CD4-positive, alpha-beta T cell (primary cell): ENCODE measurements at regions of chr10 and their contacts with region 1.

Region 1: GRCh38 chr10:92848441-92849233 is at the start of gene EXOC6:
- DNase-seq: peak; percentile 75 to 95 (median 85)
- ATAC-seq: peak; percentile 87
- H3K4me3 ChIP-seq: peak within 1 kb of the TSS; percentile 69
- H3K4me3 Mint-ChIP-seq: peak within 1 kb of the TSS; percentile 94
- H3K27ac ChIP-seq: peak within 1 kb of the TSS; percentile 72
- H3K27ac Mint-ChIP-seq: peak within 1 kb of the TSS; percentile 85
- H3K4me1 ChIP-seq: peaks cover 12% of the 10 kb centered on the region
- H3K4me1 Mint-ChIP-seq: peaks cover 36% of the 10 kb centered on the region
- H3K27me3 ChIP-seq: no peaks in the 10 kb centered on the region
- H3K27me3 Mint-ChIP-seq: no peaks in the 10 kb centered on the region
- CTCF ChIP-seq: no peak
- total RNA-seq, gene EXOC6: 6.6 to 7.4 TPM

Region 2: DNA sequence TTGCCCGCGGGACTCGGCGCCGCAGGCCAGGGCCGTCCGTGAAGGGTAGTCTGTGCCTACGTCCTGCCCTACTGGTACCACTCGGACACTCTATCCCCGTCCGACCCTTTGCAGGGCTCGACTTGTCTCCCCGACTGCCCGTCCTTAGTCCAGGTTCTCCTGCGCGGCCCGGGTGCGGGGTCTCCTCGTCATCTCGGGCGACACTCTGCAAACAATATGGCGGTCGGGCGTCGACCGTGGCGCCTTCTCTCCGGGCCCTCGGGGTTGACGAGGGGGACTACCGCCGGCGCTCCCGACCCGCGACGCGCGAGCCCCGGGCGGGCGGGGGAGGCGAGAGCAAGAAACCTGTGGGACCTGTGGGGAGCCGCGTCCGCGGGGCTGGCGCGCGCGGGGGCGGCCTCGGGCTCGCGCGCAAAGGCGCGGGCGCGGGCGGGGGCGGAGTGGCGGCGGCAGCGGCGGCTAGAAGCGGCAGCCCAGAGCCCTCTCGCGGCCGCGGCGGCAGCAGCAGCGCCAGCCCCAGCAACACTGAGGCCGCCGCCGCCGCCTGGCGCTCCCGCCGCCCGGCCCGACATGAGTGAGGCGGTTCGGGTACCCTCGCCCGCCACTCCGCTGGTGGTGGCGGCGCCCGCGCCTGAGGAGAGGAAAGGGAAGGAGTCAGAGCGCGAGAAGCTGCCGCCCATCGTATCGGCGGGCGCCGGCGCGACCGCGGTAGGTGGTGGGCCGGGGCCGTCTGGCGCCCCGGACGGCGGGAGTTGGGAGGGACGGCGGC is 1438.6 kb before region 1 on chr10 and contains the start of gene HECTD2:
- CTCF ChIA-PET with region 1: no interaction called
- POLR2A ChIA-PET with region 1: no interaction called
- intact Hi-C with region 1: loop called in 1 of 2 experiments (anchors 5 kb)
- DNase-seq: peak; percentile 61 to 94 (median 82)
- ATAC-seq: peak; percentile 85
- H3K4me3 ChIP-seq: peak within 1 kb of the TSS; percentile 92
- H3K4me3 Mint-ChIP-seq: peak within 1 kb of the TSS; percentile 92
- H3K27ac ChIP-seq: peak within 1 kb of the TSS; percentile 82 to 86
- H3K27ac Mint-ChIP-seq: peak within 1 kb of the TSS; percentile 86
- H3K4me1 ChIP-seq: peaks cover 14% of the 10 kb centered on the region
- H3K4me1 Mint-ChIP-seq: peaks cover 11% of the 10 kb centered on the region
- H3K27me3 ChIP-seq: peaks cover 3 to 8% of the 10 kb centered on the region in 2 experiments
- H3K27me3 Mint-ChIP-seq: no peaks in the 10 kb centered on the region
- CTCF ChIP-seq: peak; percentile 19
- total RNA-seq, gene HECTD2: 0.92 to 1.0 TPM

Region 3: GRCh38 chr10:92592761-92593618 is 255.6 kb before region 1 on chr10 and contains the start of gene KIF11:
- CTCF ChIA-PET with region 1: no interaction called
- POLR2A ChIA-PET with region 1: interaction called, 33 read pairs
- intact Hi-C with region 1: loop called in 1 of 2 experiments (anchors 5 kb)
- DNase-seq: peak; percentile 91 to 98 (median 96)
- ATAC-seq: peak; percentile 81
- H3K4me3 ChIP-seq: peak within 1 kb of the TSS; percentile 75
- H3K4me3 Mint-ChIP-seq: peak within 1 kb of the TSS; percentile 99
- H3K27ac ChIP-seq: peak within 1 kb of the TSS; percentile 84 to 89
- H3K27ac Mint-ChIP-seq: peak within 1 kb of the TSS; percentile 99
- H3K4me1 ChIP-seq: peaks cover 38% of the 10 kb centered on the region
- H3K4me1 Mint-ChIP-seq: peaks cover 29% of the 10 kb centered on the region
- H3K27me3 ChIP-seq: no peaks in the 10 kb centered on the region
- H3K27me3 Mint-ChIP-seq: no peaks in the 10 kb centered on the region
- CTCF ChIP-seq: no peak
- total RNA-seq, gene KIF11: 0.38 to 0.47 TPM

Region 4: GRCh38 chr10:92742331-92743228 is 106.1 kb before region 1 on chr10:
- CTCF ChIA-PET with region 1: no interaction called
- POLR2A ChIA-PET with region 1: no interaction called
- intact Hi-C with region 1: no loop called
- DNase-seq: peak in 3 of 14 experiments; percentile 16 to 28 (median 26)
- ATAC-seq: no peak
- H3K4me3 ChIP-seq: no peak overlapping the region
- H3K4me3 Mint-ChIP-seq: no peak overlapping the region
- H3K27ac ChIP-seq: no peak overlapping the region
- H3K27ac Mint-ChIP-seq: no peak overlapping the region
- H3K4me1 ChIP-seq: peaks cover 3% of the 10 kb centered on the region
- H3K4me1 Mint-ChIP-seq: no peaks in the 10 kb centered on the region
- H3K27me3 ChIP-seq: peaks cover 0 to 3% of the 10 kb centered on the region in 2 experiments
- H3K27me3 Mint-ChIP-seq: peaks cover 3% of the 10 kb centered on the region
- CTCF ChIP-seq: no peak

Region 5: DNA sequence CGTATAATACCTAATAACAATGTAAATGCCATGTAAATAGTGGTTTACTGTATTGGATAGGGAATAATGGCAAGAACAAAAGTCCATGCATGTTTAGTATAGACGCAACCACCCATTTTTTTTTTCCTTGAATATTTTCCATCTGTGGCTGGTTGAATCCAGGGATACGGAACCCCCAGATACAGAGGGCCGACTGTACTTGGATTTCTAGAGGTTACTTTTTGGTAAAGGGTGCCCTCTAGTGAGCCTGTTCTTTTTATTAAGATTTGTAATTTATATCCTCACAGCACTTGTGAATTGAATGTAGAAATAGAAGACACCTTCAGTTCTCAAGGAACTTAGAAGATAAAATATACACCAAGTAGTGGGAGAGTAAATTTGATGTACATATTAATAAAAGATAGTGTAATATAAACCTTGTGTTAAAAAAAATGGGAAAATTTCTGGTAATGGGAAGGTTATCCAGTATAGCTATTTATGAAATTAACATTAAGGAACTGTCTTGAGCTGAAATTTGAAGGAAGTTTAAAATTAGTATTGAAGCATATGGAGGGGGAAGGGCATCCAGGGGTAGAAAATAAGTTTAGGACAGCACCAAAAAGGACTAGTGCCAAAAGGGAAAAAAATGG is 31.7 kb after region 1 on chr10:
- CTCF ChIA-PET with region 1: interaction called, 10 read pairs
- POLR2A ChIA-PET with region 1: interaction called, 15 read pairs
- intact Hi-C with region 1: loop called (anchors 1 kb)
- DNase-seq: peak in 4 of 14 experiments; percentile 13 to 56 (median 56)
- ATAC-seq: peak; percentile 39
- H3K4me3 ChIP-seq: no peak overlapping the region
- H3K4me3 Mint-ChIP-seq: no peak overlapping the region
- H3K27ac ChIP-seq: no peak overlapping the region
- H3K27ac Mint-ChIP-seq: no peak overlapping the region
- H3K4me1 ChIP-seq: peaks cover 5% of the 10 kb centered on the region
- H3K4me1 Mint-ChIP-seq: peaks cover 29% of the 10 kb centered on the region
- H3K27me3 ChIP-seq: no peaks in the 10 kb centered on the region
- H3K27me3 Mint-ChIP-seq: no peaks in the 10 kb centered on the region
- CTCF ChIP-seq: peak; percentile 75

Region 6: GRCh38 chr10:93352638-93353383 is 504.2 kb after region 1 on chr10:
- CTCF ChIA-PET with region 1: no interaction called
- POLR2A ChIA-PET with region 1: no interaction called
- intact Hi-C with region 1: loop called (anchors 2 kb)
- DNase-seq: peak in 3 of 14 experiments; percentile 47 to 58 (median 50)
- ATAC-seq: no peak
- H3K4me3 ChIP-seq: no peak overlapping the region
- H3K4me3 Mint-ChIP-seq: no peak overlapping the region
- H3K27ac ChIP-seq: no peak overlapping the region
- H3K27ac Mint-ChIP-seq: no peak overlapping the region
- H3K4me1 ChIP-seq: no peaks in the 10 kb centered on the region
- H3K4me1 Mint-ChIP-seq: no peaks in the 10 kb centered on the region
- H3K27me3 ChIP-seq: peaks cover 0 to 5% of the 10 kb centered on the region in 2 experiments
- H3K27me3 Mint-ChIP-seq: peaks cover 30% of the 10 kb centered on the region
- CTCF ChIP-seq: peak; percentile 85

Region 7: GRCh38 chr10:93702211-93703001 is 853.8 kb after region 1 on chr10 and contains the start of gene FRA10AC1:
- CTCF ChIA-PET with region 1: interaction called, 3 read pairs
- POLR2A ChIA-PET with region 1: interaction called, 5 read pairs
- intact Hi-C with region 1: loop called in 1 of 2 experiments (anchors 10 kb)
- DNase-seq: peak; percentile 80 to 93 (median 86)
- ATAC-seq: peak; percentile 81
- H3K4me3 ChIP-seq: peak within 1 kb of the TSS; percentile 87
- H3K4me3 Mint-ChIP-seq: no peak within 1 kb of the TSS
- H3K27ac ChIP-seq: peak within 1 kb of the TSS; percentile 71 to 77
- H3K27ac Mint-ChIP-seq: no peak within 1 kb of the TSS
- H3K4me1 ChIP-seq: peaks cover 5% of the 10 kb centered on the region
- H3K4me1 Mint-ChIP-seq: peaks cover 19% of the 10 kb centered on the region
- H3K27me3 ChIP-seq: no peaks in the 10 kb centered on the region
- H3K27me3 Mint-ChIP-seq: no peaks in the 10 kb centered on the region
- CTCF ChIP-seq: no peak
- total RNA-seq, gene FRA10AC1: 10.0 to 10.3 TPM